Dorsolateral prefrontal cortex (tissue), 120 donors: ENCODE measurements at regions of chr2 and their contacts with region 1.

Region 1: DNA sequence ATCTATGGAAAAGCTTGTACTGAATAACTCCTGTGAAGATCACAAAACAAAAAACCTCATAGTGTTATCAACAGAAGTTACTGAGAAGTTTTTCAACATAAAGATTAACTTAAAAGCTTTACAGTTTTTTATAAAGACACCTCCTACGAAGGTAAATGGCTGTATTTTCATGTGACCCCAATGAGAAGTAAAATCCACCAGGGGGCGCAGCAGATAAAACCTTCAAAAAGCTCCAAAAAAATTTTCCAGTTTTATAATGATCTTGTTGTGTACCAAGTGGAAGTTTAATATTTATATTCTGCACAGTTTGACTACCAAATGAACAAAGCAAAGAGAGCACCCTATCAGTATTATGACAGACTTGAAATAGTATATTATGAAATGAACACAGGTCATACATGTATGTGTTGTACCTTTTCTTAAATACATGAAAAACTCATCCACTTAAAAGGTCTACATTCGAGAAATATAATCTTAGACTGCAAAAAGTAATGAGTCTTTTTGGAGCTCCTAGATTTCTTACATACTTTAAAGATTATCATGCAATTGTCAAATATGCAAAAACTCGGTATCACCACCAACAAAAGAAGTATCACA is 38.5 kb downstream of the PNO1 start:
- DNase-seq: peak in 3 of 10 donors; percentile 9 to 39 (median 25)
- H3K4me3 ChIP-seq: no peak overlapping the region
- H3K27ac ChIP-seq: peak overlapping the region in 1 of 59 donors; percentile 7
- H3K27me3 ChIP-seq: no peaks in the 10 kb centered on the region
- CTCF ChIP-seq: peak in 52 of 56 donors; percentile 45 to 94 (median 80)

Region 2: GRCh38 chr2:68282811-68283418 is 86.7 kb after region 1 on chr2:
- intact Hi-C with region 1: loop called in 1 of 2 experiments (anchors 10 kb)
- DNase-seq: no peak
- H3K4me3 ChIP-seq: peak overlapping the region in 36 of 59 donors; percentile 0 to 51 (median 23)
- H3K27ac ChIP-seq: no peak overlapping the region
- H3K27me3 ChIP-seq: no peaks in the 10 kb centered on the region
- CTCF ChIP-seq: peak; percentile 67 to 95 (median 81)

Region 3: DNA sequence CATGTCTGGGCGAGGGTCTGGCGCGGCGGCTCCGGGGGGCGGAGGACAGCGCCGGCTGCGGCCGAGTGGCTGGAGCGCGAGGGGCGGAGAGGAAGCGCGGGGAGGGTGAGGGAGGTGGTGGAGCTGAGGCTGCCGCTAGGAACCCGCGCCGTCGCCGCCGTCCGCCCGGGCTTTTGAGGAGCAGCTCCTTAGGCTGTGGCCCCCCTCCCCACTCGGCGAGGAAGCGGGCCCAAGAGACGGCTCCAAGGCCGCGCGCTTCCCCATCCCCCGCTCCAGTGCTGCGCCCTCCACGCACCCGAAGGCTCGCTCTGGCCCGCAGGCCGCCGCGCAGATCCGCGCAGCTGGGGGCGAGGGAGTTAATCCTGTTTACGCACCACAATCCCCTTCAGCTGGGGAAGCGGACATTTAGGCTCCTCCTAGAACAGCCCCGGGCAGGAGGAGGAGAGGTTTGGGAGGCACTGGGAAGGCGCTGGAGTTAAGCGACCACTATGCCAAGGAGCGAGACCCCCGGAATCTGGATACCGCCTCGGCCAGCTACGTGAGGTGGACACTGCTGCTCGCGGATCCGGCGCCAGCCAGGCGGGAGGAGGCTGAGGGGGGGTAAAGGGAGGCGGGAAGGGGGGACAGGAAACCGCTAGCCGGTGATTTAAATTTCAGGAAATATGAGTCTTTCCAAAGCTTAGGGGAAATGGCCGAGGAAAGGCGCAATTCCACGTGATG is 123.3 kb after region 1 on chr2 and contains the start of gene CNRIP1:
- intact Hi-C with region 1: no loop called
- DNase-seq: peak; percentile 47 to 78 (median 69)
- H3K4me3 ChIP-seq: peak within 1 kb of the TSS; percentile 67 to 97 (median 87)
- H3K27ac ChIP-seq: peak within 1 kb of the TSS; percentile 64 to 99 (median 96)
- H3K27me3 ChIP-seq: no peaks in the 10 kb centered on the region
- CTCF ChIP-seq: peak in 6 of 56 donors; percentile 2 to 29 (median 12)
- total RNA-seq, gene CNRIP1: 48.6 to 133 (median 99.0) TPM